CD4-positive, alpha-beta T cell (primary cell): ENCODE measurements at regions of chr1 and their contacts with region 1.

Region 1: DNA sequence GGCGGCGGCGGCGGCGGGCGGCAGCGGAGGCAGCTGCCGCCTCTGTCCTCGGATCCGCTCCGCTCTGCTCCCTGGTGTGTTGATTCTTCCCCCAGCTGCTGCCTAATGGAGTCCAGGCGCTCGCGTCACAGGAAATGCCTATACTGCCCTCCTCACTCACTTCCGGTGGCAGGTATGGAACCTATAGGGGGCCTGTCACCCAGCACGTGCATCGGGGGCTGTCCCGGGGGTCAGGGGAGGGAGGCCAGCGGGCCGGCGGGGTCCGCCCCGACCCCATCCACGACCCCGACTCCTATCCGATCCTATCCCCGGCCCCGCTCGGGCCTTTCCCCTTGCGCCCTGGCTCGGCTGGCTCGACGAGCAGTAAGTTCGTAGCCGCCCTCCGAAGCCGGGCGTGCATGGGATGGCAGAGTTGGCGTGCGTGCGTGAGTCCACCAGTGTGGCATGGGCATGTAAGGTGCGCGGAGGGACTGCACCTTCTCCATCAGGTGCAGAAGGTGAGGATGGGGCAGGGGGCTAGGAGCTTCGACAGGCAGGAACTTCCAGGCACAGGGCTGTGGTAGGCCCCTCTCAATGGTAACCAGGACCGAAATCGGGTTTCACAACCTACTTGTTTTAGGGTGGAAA is at the start of gene WDR26:
- DNase-seq: peak; percentile 62 to 93 (median 74)
- ATAC-seq: peak; percentile 82
- H3K4me3 ChIP-seq: peak within 1 kb of the TSS; percentile 84
- H3K4me3 Mint-ChIP-seq: peak within 1 kb of the TSS; percentile 99
- H3K27ac ChIP-seq: peak within 1 kb of the TSS; percentile 91 to 95
- H3K27ac Mint-ChIP-seq: peak within 1 kb of the TSS; percentile 100
- H3K4me1 ChIP-seq: peaks cover 29% of the 10 kb centered on the region
- H3K4me1 Mint-ChIP-seq: peaks cover 58% of the 10 kb centered on the region
- H3K27me3 ChIP-seq: no peaks in the 10 kb centered on the region
- H3K27me3 Mint-ChIP-seq: no peaks in the 10 kb centered on the region
- CTCF ChIP-seq: no peak
- total RNA-seq, gene WDR26: 173 to 176 TPM

Region 2: GRCh38 chr1:224113918-224114786 is 320.7 kb before region 1 on chr1 and contains the start of gene FBXO28:
- CTCF ChIA-PET with region 1: no interaction called
- POLR2A ChIA-PET with region 1: interaction called, 5 read pairs
- intact Hi-C with region 1: loop called in 1 of 2 experiments (anchors 5 kb)
- DNase-seq: peak; percentile 85 to 96 (median 92)
- ATAC-seq: peak; percentile 91
- H3K4me3 ChIP-seq: peak within 1 kb of the TSS; percentile 98
- H3K4me3 Mint-ChIP-seq: peak within 1 kb of the TSS; percentile 92
- H3K27ac ChIP-seq: peak within 1 kb of the TSS; percentile 91 to 98
- H3K27ac Mint-ChIP-seq: peak within 1 kb of the TSS; percentile 84
- H3K4me1 ChIP-seq: peaks cover 17% of the 10 kb centered on the region
- H3K4me1 Mint-ChIP-seq: peaks cover 42% of the 10 kb centered on the region
- H3K27me3 ChIP-seq: no peaks in the 10 kb centered on the region
- H3K27me3 Mint-ChIP-seq: peaks cover 6% of the 10 kb centered on the region
- CTCF ChIP-seq: no peak
- total RNA-seq, gene FBXO28: 32.5 to 37.1 TPM

Region 3: GRCh38 chr1:224356685-224357625 is 77.8 kb before region 1 on chr1 and contains the start of gene CNIH4:
- CTCF ChIA-PET with region 1: no interaction called
- POLR2A ChIA-PET with region 1: interaction called, 7 read pairs
- intact Hi-C with region 1: loop called (anchors 1 to 2 kb)
- DNase-seq: peak; percentile 83 to 97 (median 88)
- ATAC-seq: peak; percentile 99
- H3K4me3 ChIP-seq: peak within 1 kb of the TSS; percentile 80
- H3K4me3 Mint-ChIP-seq: peak within 1 kb of the TSS; percentile 99
- H3K27ac ChIP-seq: peak within 1 kb of the TSS; percentile 56 to 72
- H3K27ac Mint-ChIP-seq: peak within 1 kb of the TSS; percentile 80
- H3K4me1 ChIP-seq: peaks cover 40% of the 10 kb centered on the region
- H3K4me1 Mint-ChIP-seq: peaks cover 45% of the 10 kb centered on the region
- H3K27me3 ChIP-seq: no peaks in the 10 kb centered on the region
- H3K27me3 Mint-ChIP-seq: no peaks in the 10 kb centered on the region
- CTCF ChIP-seq: no peak
- total RNA-seq, gene CNIH4: 31.2 to 33.6 TPM

Region 4: DNA sequence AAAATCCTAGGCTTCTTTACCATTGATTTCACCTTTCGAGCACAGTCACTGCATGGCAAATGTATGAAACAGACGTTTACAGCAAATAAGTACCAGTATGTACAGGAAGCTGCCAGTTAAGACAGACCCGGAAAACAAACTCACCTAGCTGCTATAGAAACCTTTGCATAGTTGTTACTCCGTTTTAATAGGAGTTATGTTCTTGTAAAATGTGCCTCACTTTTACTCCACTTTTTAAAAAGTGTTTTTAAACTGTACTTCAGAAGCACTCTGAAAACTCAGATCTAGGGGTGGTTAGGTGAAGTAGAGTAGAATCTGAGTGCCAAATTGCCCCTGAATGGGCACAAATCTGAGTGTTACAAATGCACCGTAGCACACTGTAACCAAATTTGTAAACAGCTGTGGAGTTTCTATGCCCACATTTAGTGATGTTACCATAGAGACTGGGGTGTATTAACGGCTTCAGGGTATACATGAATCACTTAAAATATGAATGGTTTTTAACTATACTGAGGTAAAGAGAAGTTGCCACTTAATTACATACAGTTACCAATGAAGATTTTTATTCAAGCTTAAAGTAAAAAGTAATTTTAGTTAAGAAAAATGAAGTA is 47.4 kb before region 1 on chr1:
- CTCF ChIA-PET with region 1: interaction called, 4 read pairs
- POLR2A ChIA-PET with region 1: interaction called, 17 read pairs
- intact Hi-C with region 1: no loop called
- DNase-seq: peak in 3 of 14 experiments; percentile 36 to 57 (median 53)
- ATAC-seq: peak; percentile 90
- H3K4me3 ChIP-seq: no peak overlapping the region
- H3K4me3 Mint-ChIP-seq: peak overlapping the region; percentile 43
- H3K27ac ChIP-seq: peak overlapping the region; percentile 21 to 25
- H3K27ac Mint-ChIP-seq: peak overlapping the region; percentile 74
- H3K4me1 ChIP-seq: peaks cover 4% of the 10 kb centered on the region
- H3K4me1 Mint-ChIP-seq: peaks cover 50% of the 10 kb centered on the region
- H3K27me3 ChIP-seq: no peaks in the 10 kb centered on the region
- H3K27me3 Mint-ChIP-seq: no peaks in the 10 kb centered on the region
- CTCF ChIP-seq: no peak

Region 5: DNA sequence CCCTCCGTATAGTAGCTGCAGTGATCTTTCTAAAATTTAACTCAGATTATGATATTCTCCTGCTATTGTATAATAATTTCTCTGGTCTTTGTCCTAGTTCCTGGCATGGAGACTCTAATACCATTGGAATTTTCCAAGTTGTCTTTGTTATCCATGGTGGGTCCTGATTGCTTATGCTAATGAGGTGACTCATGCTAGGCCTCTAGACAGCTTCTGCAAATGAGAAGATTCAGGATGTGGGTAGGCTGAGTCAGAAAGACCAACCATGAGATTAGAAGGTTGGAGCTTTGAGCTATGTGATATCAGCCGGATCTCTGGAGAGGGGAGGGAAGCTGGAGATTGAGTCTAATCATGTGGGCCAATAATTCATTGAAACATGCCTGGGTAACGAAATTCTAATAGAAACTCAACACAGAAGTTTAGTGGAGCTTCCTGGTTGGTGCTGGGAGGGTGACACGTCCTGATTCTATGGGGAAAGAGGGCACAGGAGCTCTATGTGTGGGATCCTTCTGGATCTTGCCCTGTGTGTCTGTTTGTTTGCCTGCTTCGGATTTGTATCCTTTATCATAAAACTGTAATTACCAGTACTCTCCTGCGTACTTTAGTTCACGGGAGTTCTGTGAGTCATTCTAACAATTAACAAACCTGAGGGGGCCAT is 108.1 kb after region 1 on chr1:
- CTCF ChIA-PET with region 1: no interaction called
- POLR2A ChIA-PET with region 1: no interaction called
- intact Hi-C with region 1: no loop called
- DNase-seq: peak in 3 of 14 experiments; percentile 34 to 58 (median 38)
- ATAC-seq: peak; percentile 65
- H3K4me3 ChIP-seq: no peak overlapping the region
- H3K4me3 Mint-ChIP-seq: no peak overlapping the region
- H3K27ac ChIP-seq: no peak overlapping the region
- H3K27ac Mint-ChIP-seq: no peak overlapping the region
- H3K4me1 ChIP-seq: no peaks in the 10 kb centered on the region
- H3K4me1 Mint-ChIP-seq: peaks cover 6% of the 10 kb centered on the region
- H3K27me3 ChIP-seq: no peaks in the 10 kb centered on the region
- H3K27me3 Mint-ChIP-seq: peaks cover 6% of the 10 kb centered on the region
- CTCF ChIP-seq: no peak

Region 6: GRCh38 chr1:226438007-226438406 is 2003.2 kb after region 1 on chr1:
- CTCF ChIA-PET with region 1: no interaction called
- POLR2A ChIA-PET with region 1: no interaction called
- intact Hi-C with region 1: no loop called
- DNase-seq: peak in 2 of 14 experiments; percentile 17 to 38
- ATAC-seq: peak; percentile 41
- H3K4me3 ChIP-seq: no peak overlapping the region
- H3K4me3 Mint-ChIP-seq: no peak overlapping the region
- H3K27ac ChIP-seq: no peak overlapping the region
- H3K27ac Mint-ChIP-seq: no peak overlapping the region
- H3K4me1 ChIP-seq: no peaks in the 10 kb centered on the region
- H3K4me1 Mint-ChIP-seq: no peaks in the 10 kb centered on the region
- H3K27me3 ChIP-seq: no peaks in the 10 kb centered on the region
- H3K27me3 Mint-ChIP-seq: no peaks in the 10 kb centered on the region
- CTCF ChIP-seq: peak; percentile 15